SK-N-SH (cell line): ENCODE measurements at regions of chr7 and their contacts with region 1.

Region 1: GRCh38 chr7:140810830-140811556 is 113.7 kb downstream of the BRAF start:
- DNase-seq: peak; percentile 67
- H3K4me3 ChIP-seq: no peak overlapping the region; a peak in 1 of 4 replicates
- H3K27ac ChIP-seq: no peak overlapping the region
- H3K4me1 ChIP-seq: peaks cover 0 to 7% of the 10 kb centered on the region in 2 experiments; a peak in 2 of 4 replicates
- H3K27me3 ChIP-seq: no peaks in the 10 kb centered on the region
- CTCF ChIP-seq: peak; percentile 95
- EP300 ChIP-seq: 0 out of 4 replicates have a peak, but pooled peaks of 1 of the 2 experiments have one; percentile 11
- RAD21 ChIP-seq: peak; percentile 89

Region 2: DNA sequence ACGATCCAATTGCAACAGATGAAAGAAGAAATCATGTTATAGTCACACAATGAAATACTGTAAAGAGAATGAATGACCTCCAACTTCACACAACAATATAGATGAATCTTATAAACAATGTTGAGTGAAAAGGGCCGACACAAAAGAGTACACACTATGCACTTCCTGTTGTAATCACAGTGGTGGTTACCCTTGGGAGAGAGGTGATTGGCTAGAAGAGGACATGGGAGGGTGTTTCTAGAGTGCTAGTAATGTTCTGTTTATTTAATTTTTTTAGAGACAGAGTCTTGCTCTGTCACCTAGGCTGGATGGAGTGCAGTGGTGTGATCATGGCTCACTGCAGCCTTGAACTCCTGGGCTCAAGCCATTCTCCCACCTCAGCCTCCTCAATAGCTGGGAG is 32.0 kb before region 1 on chr7:
- CTCF ChIA-PET with region 1: interaction called, 12 read pairs
- POLR2A ChIA-PET with region 1: no interaction called
- DNase-seq: no peak
- H3K4me3 ChIP-seq: no peak overlapping the region
- H3K27ac ChIP-seq: no peak overlapping the region
- H3K4me1 ChIP-seq: no peaks in the 10 kb centered on the region
- H3K27me3 ChIP-seq: no peaks in the 10 kb centered on the region
- CTCF ChIP-seq: no peak
- EP300 ChIP-seq: no peak
- RAD21 ChIP-seq: no peak

Region 3: GRCh38 chr7:140876519-140877248 is 65.7 kb after region 1 on chr7:
- CTCF ChIA-PET with region 1: interaction called, 10 read pairs
- POLR2A ChIA-PET with region 1: no interaction called
- DNase-seq: no peak
- H3K4me3 ChIP-seq: no peak overlapping the region
- H3K27ac ChIP-seq: no peak overlapping the region
- H3K4me1 ChIP-seq: peaks cover 0 to 6% of the 10 kb centered on the region in 2 experiments; a peak in 1 of 4 replicates
- H3K27me3 ChIP-seq: no peaks in the 10 kb centered on the region
- CTCF ChIP-seq: no peak
- EP300 ChIP-seq: peak in 1 of 2 experiments; percentile 20; a peak in 1 of 4 replicates
- RAD21 ChIP-seq: no peak

Region 4: GRCh38 chr7:140983802-140984201 is 172.8 kb after region 1 on chr7:
- CTCF ChIA-PET with region 1: interaction called, 10 read pairs
- POLR2A ChIA-PET with region 1: no interaction called
- DNase-seq: no peak
- H3K4me3 ChIP-seq: no peak overlapping the region
- H3K27ac ChIP-seq: no peak overlapping the region
- H3K4me1 ChIP-seq: no peaks in the 10 kb centered on the region
- H3K27me3 ChIP-seq: no peaks in the 10 kb centered on the region
- CTCF ChIP-seq: peak; percentile 42
- EP300 ChIP-seq: no peak
- RAD21 ChIP-seq: peak; percentile 45

Region 5: GRCh38 chr7:141220263-141220880 is 409.4 kb after region 1 on chr7:
- CTCF ChIA-PET with region 1: interaction called, 20 read pairs
- POLR2A ChIA-PET with region 1: no interaction called
- DNase-seq: peak; percentile 86
- H3K4me3 ChIP-seq: peak overlapping the region in 1 of 2 experiments; percentile 47; a peak in 1 of 4 replicates
- H3K27ac ChIP-seq: no peak overlapping the region
- H3K4me1 ChIP-seq: peaks cover 0 to 22% of the 10 kb centered on the region in 2 experiments; a peak in 1 of 4 replicates
- H3K27me3 ChIP-seq: no peaks in the 10 kb centered on the region
- CTCF ChIP-seq: no peak
- EP300 ChIP-seq: no peak
- RAD21 ChIP-seq: peak; percentile 90

Region 6: GRCh38 chr7:141533149-141533949 is 722.4 kb after region 1 on chr7:
- CTCF ChIA-PET with region 1: interaction called, 21 read pairs
- POLR2A ChIA-PET with region 1: no interaction called
- DNase-seq: peak; percentile 77
- H3K4me3 ChIP-seq: no peak overlapping the region; a peak in 1 of 4 replicates
- H3K27ac ChIP-seq: no peak overlapping the region
- H3K4me1 ChIP-seq: peaks cover 0 to 2% of the 10 kb centered on the region in 2 experiments; a peak in 1 of 4 replicates
- H3K27me3 ChIP-seq: no peaks in the 10 kb centered on the region; the same call in 1 of the 2 replicates
- CTCF ChIP-seq: peak; percentile 100
- EP300 ChIP-seq: no peak
- RAD21 ChIP-seq: peak; percentile 98